Ascending aorta (tissue), 2 donors: ENCODE measurements at regions of chr15 and their contacts with region 1.

Region 1: GRCh38 chr15:80934761-80935221 is 54.8 kb downstream of the MESD start:
- DNase-seq: no peak
- H3K4me3 ChIP-seq: no peak overlapping the region
- H3K27ac ChIP-seq: no peak overlapping the region
- H3K4me1 ChIP-seq: peaks cover 0 to 16% of the 10 kb centered on the region in 2 donors
- H3K27me3 ChIP-seq: no peaks in the 10 kb centered on the region
- CTCF ChIP-seq: no peak

Region 2: DNA sequence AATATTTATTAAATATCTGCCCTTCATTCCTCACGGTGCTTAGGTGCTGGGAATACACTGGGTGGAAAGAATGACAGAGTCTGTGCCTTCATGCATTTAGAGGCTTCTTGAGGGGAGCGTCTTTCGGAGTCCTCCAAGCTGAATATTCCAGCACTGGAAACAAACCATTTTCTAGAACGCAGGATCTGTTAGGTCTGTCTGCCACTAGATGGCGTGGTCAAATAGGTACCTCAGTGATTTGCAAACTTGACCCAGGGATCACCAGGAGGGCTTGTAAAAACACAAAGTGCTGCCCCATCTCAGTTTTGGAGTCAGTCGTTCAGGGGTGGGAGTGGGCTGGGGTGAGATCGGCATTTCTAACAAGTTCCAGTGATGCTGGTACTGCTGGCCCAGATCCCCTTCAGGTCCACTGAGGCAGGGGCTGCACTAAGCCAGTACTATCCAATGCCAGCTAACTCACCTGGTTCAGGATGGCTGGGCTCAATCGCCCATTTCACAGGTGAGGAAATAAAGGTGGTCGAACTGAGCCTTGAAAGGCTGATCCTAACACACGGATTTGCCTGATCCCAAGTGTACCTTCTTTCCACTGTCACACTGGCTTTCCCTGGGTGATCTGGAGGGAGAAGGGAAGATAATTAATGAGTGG is 515.8 kb before region 1 on chr15:
- intact Hi-C with region 1: no loop called
- DNase-seq: no peak
- H3K4me3 ChIP-seq: no peak overlapping the region
- H3K27ac ChIP-seq: no peak overlapping the region
- H3K4me1 ChIP-seq: peaks cover 0 to 5% of the 10 kb centered on the region in 2 donors
- H3K27me3 ChIP-seq: no peaks in the 10 kb centered on the region
- CTCF ChIP-seq: peak in 2 of 3 experiments; percentile 27 to 43

Region 3: GRCh38 chr15:80489030-80489594 is 445.7 kb before region 1 on chr15:
- intact Hi-C with region 1: loop called (anchors 5 kb)
- DNase-seq: no peak
- H3K4me3 ChIP-seq: no peak overlapping the region
- H3K27ac ChIP-seq: peak overlapping the region; percentile 56 to 69
- H3K4me1 ChIP-seq: peaks cover 6 to 19% of the 10 kb centered on the region in 2 donors
- H3K27me3 ChIP-seq: no peaks in the 10 kb centered on the region
- CTCF ChIP-seq: no peak

Region 4: DNA sequence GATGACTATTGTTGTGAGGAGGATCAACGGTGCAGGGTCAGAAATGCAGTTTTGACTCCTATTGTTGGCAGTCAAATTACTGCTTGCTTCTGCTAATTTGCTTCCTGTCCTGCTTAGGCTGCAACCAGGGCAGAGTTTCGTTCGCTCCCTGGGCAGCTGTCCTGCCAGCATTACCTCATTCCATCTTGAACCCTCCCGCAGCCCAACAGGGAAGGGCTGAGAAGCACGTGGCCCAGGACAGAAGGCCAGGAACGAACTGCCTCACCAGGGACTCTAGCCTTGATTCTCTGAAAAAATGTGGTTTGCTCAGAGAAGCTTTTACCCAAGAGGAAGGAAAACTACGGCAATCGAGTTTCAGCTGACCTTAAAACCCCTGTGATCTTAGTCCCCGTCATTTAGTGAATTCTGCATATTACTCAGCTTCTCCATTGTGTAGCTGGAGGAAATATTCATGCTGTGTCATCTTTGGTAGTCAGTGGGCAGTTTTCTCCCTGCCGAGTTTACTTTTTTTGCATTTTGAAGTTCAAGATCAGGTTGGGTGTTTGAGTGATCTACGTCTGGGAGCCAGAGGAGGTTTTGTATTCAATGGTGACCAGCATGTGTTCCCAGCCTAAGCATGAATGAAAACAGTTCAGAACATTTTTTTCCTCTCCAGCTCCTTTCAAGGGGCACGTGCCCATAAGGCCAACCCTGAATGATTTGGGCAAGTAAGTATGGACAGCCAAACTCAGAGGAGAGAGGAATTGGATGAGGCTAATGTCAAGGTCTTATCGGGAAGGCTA is 88.9 kb after region 1 on chr15:
- intact Hi-C with region 1: no loop called
- DNase-seq: peak; percentile 65 to 89
- H3K4me3 ChIP-seq: peak overlapping the region in 1 of 2 donors; percentile 13
- H3K27ac ChIP-seq: peak overlapping the region; percentile 64 to 70
- H3K4me1 ChIP-seq: no peaks in the 10 kb centered on the region
- H3K27me3 ChIP-seq: no peaks in the 10 kb centered on the region
- CTCF ChIP-seq: no peak